A549 (cell line): ENCODE measurements at regions of chr1 and their contacts with region 1.

Region 1: DNA sequence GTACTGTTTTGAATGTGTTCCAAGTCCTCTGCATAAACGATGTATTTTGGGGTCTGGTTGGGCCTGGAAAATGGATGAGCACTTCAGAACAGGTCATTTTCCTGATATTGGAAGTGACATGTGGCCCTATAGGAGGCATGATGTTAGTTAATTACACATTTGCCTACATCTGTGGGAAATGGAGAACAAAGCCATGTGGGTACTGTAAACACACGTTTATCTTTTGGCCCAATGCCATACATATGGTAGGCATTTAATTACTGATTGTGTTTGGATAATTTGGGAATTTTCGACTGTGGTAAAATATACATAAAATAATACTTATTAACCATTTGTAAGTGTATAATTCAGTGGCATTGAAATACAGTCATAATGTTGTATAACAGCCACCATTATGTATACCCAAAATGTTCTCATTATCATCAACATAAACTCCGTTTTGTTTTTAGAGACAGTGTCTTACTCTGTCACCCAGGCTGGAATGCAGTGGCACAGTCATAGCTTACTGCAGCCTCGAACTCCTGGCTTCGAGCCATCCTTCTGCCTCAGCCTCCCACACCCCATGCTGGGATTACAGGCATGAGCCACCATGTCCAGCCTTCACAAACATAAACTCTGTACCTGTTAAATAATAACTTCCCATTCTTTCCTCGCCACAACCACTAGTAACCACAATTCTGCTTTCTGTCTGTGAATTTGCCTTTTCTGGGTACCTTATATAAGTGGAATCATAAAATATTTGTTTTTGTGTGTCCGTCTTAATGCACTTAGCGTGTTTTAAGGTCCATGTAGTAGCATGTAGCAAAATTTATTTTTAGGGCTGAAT is 11.9 kb upstream of the RNPEP start:
- DNase-seq: no peak
- ATAC-seq: no peak
- H3K4me3 ChIP-seq: no peak overlapping the region
- H3K27ac ChIP-seq: no peak overlapping the region
- H3K4me1 ChIP-seq: no peaks in the 10 kb centered on the region
- CTCF ChIP-seq: no peak
- EP300 ChIP-seq: no peak
- POLR2A ChIP-seq: no peak
- RAD21 ChIP-seq: no peak

Region 2: GRCh38 chr1:201877877-201878401 is 92.6 kb before region 1 on chr1:
- CTCF ChIA-PET with region 1: interaction called, 31 read pairs
- POLR2A ChIA-PET with region 1: no interaction called
- DNase-seq: peak; percentile 57 to 58
- ATAC-seq: peak; percentile 68 to 70; a peak in 4 of 6 replicates
- H3K4me3 ChIP-seq: no peak overlapping the region
- H3K27ac ChIP-seq: no peak overlapping the region
- H3K4me1 ChIP-seq: peaks cover 8% of the 10 kb centered on the region
- CTCF ChIP-seq: peak; percentile 63
- EP300 ChIP-seq: no peak
- POLR2A ChIP-seq: no peak
- RAD21 ChIP-seq: peak; percentile 53

Region 3: GRCh38 chr1:201907621-201908020 is 62.9 kb before region 1 on chr1:
- CTCF ChIA-PET with region 1: interaction called, 855 read pairs
- POLR2A ChIA-PET with region 1: no interaction called
- DNase-seq: no peak
- ATAC-seq: no peak
- H3K4me3 ChIP-seq: no peak overlapping the region
- H3K27ac ChIP-seq: no peak overlapping the region
- H3K4me1 ChIP-seq: no peaks in the 10 kb centered on the region
- CTCF ChIP-seq: no peak
- EP300 ChIP-seq: no peak
- POLR2A ChIP-seq: no peak
- RAD21 ChIP-seq: no peak

Region 4: DNA sequence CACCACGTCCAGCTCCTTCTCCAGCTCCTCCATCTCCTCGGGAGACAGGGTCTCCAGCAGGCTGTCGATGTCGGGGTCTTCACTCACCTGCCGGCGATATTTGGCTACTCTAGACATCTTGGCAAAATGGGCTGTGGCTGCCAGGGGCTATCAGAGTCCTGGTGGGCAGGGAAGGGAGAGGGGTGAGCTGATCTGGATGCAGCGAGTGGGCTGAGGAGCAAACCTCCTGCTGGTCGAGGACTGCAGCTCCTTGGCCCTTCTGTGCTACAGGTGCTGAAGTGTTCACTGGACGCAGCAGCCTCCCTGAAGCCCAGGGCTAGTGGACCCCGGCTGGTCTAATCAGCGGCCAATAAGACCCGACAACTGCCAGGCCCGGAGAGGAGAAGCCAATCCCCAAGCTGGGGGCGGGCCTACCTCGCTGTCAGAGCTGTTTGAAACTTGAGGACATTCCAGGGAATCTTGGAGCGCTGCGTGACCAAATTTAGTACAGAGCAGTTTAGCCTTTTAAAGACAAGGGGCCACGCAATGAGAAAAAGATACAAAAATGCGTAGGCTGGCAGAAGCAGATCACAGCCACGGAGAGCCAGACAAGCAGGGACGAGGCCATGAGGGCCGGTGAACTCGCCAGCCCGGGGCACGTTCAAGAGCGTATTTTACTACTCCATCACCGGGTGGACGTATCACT is 24.2 kb before region 1 on chr1 and contains the start of gene LMOD1:
- CTCF ChIA-PET with region 1: interaction called, 21 read pairs
- POLR2A ChIA-PET with region 1: no interaction called
- DNase-seq: no peak
- ATAC-seq: peak in 1 of 2 experiments; percentile 69; a peak in 3 of 6 replicates
- H3K4me3 ChIP-seq: no peak within 1 kb of the TSS
- H3K27ac ChIP-seq: no peak within 1 kb of the TSS
- H3K4me1 ChIP-seq: no peaks in the 10 kb centered on the region
- CTCF ChIP-seq: no peak
- EP300 ChIP-seq: no peak
- POLR2A ChIP-seq: no peak
- RAD21 ChIP-seq: no peak
- polyA plus RNA-seq, gene LMOD1: 0.03 TPM in 1 of 2 replicates, not detected in the other

Region 5: GRCh38 chr1:201982623-201983379 is 12.3 kb after region 1 on chr1 and contains the start of gene RNPEP:
- CTCF ChIA-PET with region 1: interaction called, 22 read pairs
- POLR2A ChIA-PET with region 1: interaction called, 5 read pairs
- DNase-seq: peak; percentile 82 to 88
- ATAC-seq: peak; percentile 91 to 93
- H3K4me3 ChIP-seq: peak within 1 kb of the TSS; percentile 60
- H3K27ac ChIP-seq: peak within 1 kb of the TSS; percentile 88 to 97
- H3K4me1 ChIP-seq: peaks cover 14% of the 10 kb centered on the region
- CTCF ChIP-seq: no peak; the same call in none of the 3 replicates
- EP300 ChIP-seq: no peak
- POLR2A ChIP-seq: peak; percentile 88
- RAD21 ChIP-seq: no peak
- polyA plus RNA-seq, gene RNPEP: 80.4 and 87.6 TPM in 2 replicates

Region 6: DNA sequence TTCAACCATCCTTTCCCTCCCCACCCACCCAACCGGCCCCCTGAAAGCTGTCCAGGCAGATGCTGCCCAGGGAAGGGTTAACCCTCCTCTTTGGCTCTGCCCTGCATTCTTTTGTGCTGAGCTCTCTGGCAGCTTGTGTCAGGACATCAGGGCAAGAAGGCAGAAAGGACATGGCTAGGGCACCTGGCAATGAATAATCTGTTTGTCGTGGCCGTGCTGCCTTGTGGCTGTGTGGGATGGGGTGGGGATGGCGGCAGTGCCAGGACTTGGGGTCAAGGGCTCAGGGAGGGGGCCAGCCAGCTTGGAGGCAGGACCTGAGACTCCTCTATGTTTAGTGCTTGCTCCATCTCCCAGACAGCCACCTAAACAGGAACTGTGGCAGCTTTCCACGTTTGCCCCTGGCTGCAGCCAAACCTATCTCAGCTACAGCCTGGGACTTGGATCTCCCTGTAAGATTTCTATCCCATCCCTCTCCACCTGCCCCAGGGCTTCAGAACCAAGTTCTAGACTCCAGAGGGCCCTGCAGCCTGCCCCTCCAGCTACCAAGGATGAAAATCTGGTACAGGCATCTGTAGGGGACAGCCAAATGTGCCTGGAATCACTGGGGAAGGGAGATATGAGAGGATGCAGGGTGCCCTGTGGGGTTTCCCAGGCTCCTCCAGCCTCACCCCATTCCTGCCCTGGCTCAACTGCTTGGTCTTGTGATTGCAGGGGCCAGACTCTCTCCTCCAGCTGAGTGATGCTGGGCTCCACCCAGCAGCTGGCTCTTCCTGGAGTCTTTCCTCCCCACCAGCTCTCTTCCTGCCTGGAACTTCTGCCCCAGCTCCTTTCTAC is 142.5 kb after region 1 on chr1:
- CTCF ChIA-PET with region 1: interaction called, 15 read pairs
- POLR2A ChIA-PET with region 1: no interaction called
- DNase-seq: peak; percentile 62 to 85
- ATAC-seq: peak; percentile 76 to 80
- H3K4me3 ChIP-seq: no peak overlapping the region
- H3K27ac ChIP-seq: peak overlapping the region; percentile 88 to 94
- H3K4me1 ChIP-seq: peaks cover 73% of the 10 kb centered on the region
- CTCF ChIP-seq: no peak
- EP300 ChIP-seq: no peak; a peak in 1 of 5 replicates
- POLR2A ChIP-seq: no peak
- RAD21 ChIP-seq: peak; percentile 24 to 25; a peak in 3 of 5 replicates